GM10248 (cell line): ENCODE measurements at regions of chr21 and their contacts with region 1.

Region 1: GRCh38 chr21:31012133-31013089 is 25.9 kb downstream of the KRTAP19-8 start:
- DNase-seq: no peak
- CTCF ChIP-seq: no peak

Region 2: GRCh38 chr21:30502041-30502440 is 510.4 kb before region 1 on chr21 and contains the start of gene KRTAP19-5:
- CTCF ChIA-PET with region 1: no interaction called
- POLR2A ChIA-PET with region 1: no interaction called
- DNase-seq: no peak
- CTCF ChIP-seq: no peak

Region 3: DNA sequence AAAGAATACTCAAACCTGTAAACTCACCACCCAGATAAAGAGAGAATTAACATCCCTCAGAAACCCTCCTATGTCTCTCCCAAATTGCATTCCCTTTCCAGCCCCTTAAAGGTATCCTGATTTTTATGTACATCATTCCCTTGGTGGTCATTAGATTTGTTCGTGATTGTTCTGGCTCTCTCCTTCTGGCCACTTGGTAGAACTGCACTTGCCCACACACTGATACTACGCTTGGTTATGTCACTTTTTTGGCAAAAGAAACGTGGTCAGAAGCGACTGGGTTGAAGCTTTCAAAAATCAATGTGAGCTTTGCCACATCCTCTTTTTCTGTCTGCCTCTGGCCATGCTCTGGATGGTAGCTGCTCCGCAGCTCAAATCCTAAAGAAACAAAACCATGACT is 50.4 kb before region 1 on chr21:
- CTCF ChIA-PET with region 1: no interaction called
- POLR2A ChIA-PET with region 1: no interaction called
- DNase-seq: no peak
- CTCF ChIP-seq: no peak

Region 4: DNA sequence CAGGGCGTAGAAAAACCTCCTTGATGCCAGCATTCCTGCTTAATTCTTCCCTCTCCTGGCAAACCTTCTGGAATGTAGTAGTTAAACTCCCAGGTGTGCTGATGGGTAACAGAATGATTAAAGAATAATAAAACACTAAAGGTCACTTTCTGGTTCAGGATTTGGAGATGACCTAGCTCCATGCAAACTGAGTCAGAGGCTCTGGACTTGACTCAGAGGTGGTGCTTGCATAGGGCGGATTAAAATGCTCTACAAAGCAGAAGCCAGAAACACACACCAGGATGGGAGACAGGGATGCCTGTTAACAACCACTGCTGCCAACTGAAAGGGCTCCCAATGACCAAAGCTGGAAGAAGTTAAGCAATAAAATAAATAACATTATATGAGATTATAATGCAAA is 15.7 kb before region 1 on chr21:
- CTCF ChIA-PET with region 1: interaction called, 10 read pairs
- POLR2A ChIA-PET with region 1: no interaction called
- DNase-seq: no peak
- CTCF ChIP-seq: no peak